Vagina (tissue), 2 donors: ENCODE measurements at regions of chr7 and their contacts with region 1.

Region 1: DNA sequence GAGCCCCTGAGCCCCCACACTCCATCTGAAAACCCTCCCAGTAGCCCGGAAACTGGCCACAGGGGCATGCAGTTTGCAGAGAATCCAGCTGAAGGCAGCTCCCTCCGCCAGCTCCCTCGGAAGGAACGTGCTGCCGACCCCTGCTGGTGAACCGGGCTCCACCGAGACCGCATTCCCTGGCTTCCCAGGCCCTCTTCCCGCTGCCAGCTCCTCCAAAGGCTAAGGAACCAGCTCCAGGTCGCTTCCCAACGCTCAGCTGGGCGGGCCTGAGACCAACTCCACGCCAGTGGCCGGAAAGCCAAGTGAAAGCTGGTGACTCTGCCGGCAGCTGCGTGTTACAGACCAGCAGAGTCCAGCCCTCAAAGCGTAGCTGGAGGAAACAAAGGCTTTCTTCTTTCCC is 35.8 kb downstream of the GPER1 start:
- DNase-seq: no peak
- H3K4me3 ChIP-seq: peak overlapping the region; percentile 8 to 23
- H3K27ac ChIP-seq: peak overlapping the region; percentile 67
- H3K4me1 ChIP-seq: peaks cover 25% of the 10 kb centered on the region
- H3K27me3 ChIP-seq: no peaks in the 10 kb centered on the region
- CTCF ChIP-seq: peak in 2 of 3 experiments; percentile 16 to 42
- POLR2A ChIP-seq: no peak

Region 2: GRCh38 chr7:974820-975681 is 148.7 kb before region 1 on chr7 and contains the start of gene COX19:
- intact Hi-C with region 1: no loop called
- DNase-seq: no peak
- H3K4me3 ChIP-seq: peak within 1 kb of the TSS; percentile 74 to 100
- H3K27ac ChIP-seq: peak within 1 kb of the TSS; percentile 91
- H3K4me1 ChIP-seq: peaks cover 35% of the 10 kb centered on the region
- H3K27me3 ChIP-seq: no peaks in the 10 kb centered on the region
- CTCF ChIP-seq: no peak
- POLR2A ChIP-seq: no peak
- total RNA-seq, gene COX19: 10.8 TPM

Region 3: DNA sequence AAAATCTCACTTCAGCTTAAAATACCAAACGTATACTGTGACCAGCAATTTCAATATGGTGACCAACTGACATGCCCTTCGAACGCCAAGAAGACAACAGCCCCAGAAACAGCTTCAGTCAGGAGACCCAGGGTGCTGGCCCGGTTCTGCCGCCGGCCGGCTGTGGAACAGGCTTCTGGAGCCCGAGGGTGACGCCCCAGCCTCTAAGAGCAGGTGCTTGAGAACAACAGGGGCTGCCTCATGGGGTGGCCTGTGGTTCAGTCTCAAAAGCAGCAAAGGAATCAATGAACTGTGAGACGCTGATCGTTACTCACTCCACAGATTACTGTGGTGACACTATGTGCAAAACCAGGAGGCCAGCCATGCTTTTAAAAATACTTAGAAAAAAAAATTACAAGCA is 18.5 kb before region 1 on chr7:
- intact Hi-C with region 1: loop called (anchors 2 kb)
- DNase-seq: no peak
- H3K4me3 ChIP-seq: no peak overlapping the region
- H3K27ac ChIP-seq: no peak overlapping the region
- H3K4me1 ChIP-seq: no peaks in the 10 kb centered on the region
- H3K27me3 ChIP-seq: no peaks in the 10 kb centered on the region
- CTCF ChIP-seq: no peak
- POLR2A ChIP-seq: no peak

Region 4: DNA sequence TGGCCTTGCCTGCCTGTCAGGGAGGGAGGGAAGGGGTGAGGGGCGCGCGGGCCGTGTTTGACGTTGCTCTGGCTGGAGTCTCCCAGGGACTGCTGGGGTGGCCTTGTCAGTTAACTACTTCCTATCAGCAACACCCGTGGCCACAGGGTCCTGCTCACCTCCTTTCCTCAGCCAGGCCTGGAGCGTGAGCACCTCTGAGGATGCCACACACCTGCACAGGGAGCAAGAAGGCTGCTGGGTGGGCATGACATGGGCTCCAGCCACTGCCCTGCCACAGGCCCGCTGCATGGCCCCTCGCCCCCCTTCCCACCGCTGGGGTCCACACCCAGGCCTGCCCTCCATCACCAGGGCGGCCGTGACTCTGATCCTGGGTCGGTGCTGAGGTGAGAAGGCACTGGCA is 758.7 kb after region 1 on chr7:
- intact Hi-C with region 1: no loop called
- DNase-seq: no peak
- H3K4me3 ChIP-seq: no peak overlapping the region
- H3K27ac ChIP-seq: no peak overlapping the region
- H3K4me1 ChIP-seq: no peaks in the 10 kb centered on the region
- H3K27me3 ChIP-seq: no peaks in the 10 kb centered on the region
- CTCF ChIP-seq: no peak
- POLR2A ChIP-seq: no peak